Thyroid gland (tissue), 4 donors: ENCODE measurements at regions of chr11 and their contacts with region 1.

Region 1: DNA sequence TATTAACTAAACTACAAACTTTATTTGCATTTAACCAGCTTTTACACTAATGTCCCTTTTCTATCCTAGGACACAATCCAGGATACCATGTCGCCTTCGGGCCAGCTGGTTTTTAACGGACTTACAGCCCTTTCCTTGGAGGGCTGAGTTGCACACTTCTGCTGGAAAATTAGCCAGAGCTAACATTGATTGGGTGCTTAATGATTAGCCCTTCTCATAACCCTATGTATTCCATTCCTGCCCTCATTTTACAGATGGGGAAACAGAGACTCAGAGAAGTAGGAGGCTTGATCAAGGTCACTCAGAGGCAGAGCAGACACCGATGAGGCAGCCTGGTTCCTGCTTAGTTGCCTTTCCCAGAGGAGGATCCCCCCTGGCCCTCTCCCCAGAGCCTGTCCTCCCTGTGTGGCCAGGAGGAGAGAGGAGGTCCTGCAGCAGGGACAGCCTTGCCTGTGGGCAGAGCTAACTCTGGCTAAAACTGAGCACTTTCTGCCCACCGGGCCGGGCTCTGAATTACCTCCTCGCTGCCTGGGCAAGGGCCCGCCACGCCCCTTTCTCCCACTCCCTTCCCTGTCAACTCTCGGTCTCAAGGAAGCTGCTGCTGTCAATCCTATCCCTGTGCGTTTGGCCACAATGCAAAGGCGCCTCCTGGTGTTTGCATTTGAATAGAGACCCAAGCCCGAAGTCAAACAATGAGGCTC is 59.6 kb upstream of the PAX6 start:
- DNase-seq: peak; percentile 52 to 61
- H3K4me3 ChIP-seq: no peak overlapping the region
- H3K27ac ChIP-seq: no peak overlapping the region
- H3K4me1 ChIP-seq: no peaks in the 10 kb centered on the region
- H3K27me3 ChIP-seq: no peaks in the 10 kb centered on the region
- CTCF ChIP-seq: peak in 5 of 6 experiments; percentile 29 to 67 (median 61)
- POLR2A ChIP-seq: no peak

Region 2: DNA sequence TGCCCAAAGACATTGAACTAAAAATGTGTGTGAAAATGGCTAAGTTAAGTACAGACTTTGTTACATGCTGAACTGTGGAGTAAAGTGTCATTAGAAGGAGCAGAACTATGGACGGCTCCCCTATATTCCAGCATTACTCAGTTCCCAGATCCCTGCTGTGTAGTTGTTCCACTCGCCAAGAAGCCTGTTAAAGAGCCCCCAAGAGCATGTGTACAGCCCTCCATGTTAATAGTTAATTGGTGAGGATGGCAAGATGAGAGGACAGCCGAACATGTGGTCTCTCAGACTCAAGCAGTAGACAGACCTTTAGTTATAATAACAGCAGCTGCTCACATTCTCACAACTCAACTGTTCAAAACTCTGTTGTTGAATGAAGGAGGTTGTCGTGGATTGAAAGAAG is 233.8 kb before region 1 on chr11:
- intact Hi-C with region 1: loop called (anchors 5 kb)
- DNase-seq: no peak
- H3K4me3 ChIP-seq: no peak overlapping the region
- H3K27ac ChIP-seq: no peak overlapping the region
- H3K4me1 ChIP-seq: no peaks in the 10 kb centered on the region
- H3K27me3 ChIP-seq: no peaks in the 10 kb centered on the region
- CTCF ChIP-seq: no peak
- POLR2A ChIP-seq: no peak